ENCODE measurements at regions of chr14 and their contacts with region 1.

Region 1: DNA sequence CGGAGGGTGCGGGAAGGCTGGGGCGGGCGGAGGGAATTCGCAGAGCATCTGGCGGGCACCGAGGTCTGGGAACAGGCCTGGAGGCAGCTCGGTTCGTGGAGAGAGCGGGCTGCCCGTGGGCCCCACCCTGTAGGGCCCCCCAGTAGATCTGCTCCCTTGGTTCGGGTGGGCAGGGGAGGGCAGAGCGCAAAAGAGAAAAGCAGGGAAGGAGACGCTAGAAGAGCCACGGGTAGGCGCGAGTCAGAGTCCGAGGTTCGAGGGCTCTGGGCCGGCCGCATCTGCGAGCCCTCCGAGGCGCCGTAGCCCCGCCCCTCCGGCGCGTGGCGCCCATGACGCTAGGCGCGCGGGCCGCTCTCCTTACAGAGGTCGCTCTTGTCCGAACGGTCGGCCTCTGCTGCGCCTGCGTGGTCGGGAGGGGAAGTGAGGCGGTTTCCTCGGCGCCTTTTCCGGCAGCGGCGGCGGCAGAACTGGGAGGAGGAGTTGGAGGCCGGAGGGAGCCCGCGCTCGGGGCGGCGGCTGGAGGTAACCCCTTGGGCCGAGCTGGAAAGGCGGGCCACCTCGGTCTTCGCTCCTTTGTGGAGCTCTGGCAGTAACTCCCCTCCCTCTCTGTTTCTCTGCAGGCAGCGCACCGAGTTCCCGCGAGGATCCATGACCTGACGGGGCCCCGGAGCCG is at the start of gene ARF6:
- DNase-seq: peak; percentile 98
- H3K4me3 Mint-ChIP-seq: peak within 1 kb of the TSS; percentile 99
- H3K27ac Mint-ChIP-seq: peak within 1 kb of the TSS; percentile 99
- H3K4me1 Mint-ChIP-seq: peaks cover 26% of the 10 kb centered on the region
- H3K27me3 Mint-ChIP-seq: no peaks in the 10 kb centered on the region
- total RNA-seq, gene ARF6: 162 and 165 TPM in 2 replicates

Region 2: GRCh38 chr14:49620182-49621113 is 272.3 kb before region 1 on chr14 and contains the starts of genes MGAT2 and RPL36AL:
- intact Hi-C with region 1: loop called (anchors 5 kb)
- DNase-seq: peak; percentile 96
- H3K4me3 Mint-ChIP-seq: peak within 1 kb of the TSS; percentile 91
- H3K27ac Mint-ChIP-seq: peak within 1 kb of the TSS; percentile 94
- H3K4me1 Mint-ChIP-seq: peaks cover 44% of the 10 kb centered on the region
- H3K27me3 Mint-ChIP-seq: no peaks in the 10 kb centered on the region
- total RNA-seq, gene MGAT2: 57.0 and 57.9 TPM in 2 replicates
- total RNA-seq, gene RPL36AL: 278 and 292 TPM in 2 replicates

Region 3: GRCh38 chr14:49867831-49868723 is 24.7 kb before region 1 on chr14:
- intact Hi-C with region 1: loop called (anchors 1 kb)
- DNase-seq: peak; percentile 94
- H3K4me3 Mint-ChIP-seq: peak overlapping the region; percentile 91
- H3K27ac Mint-ChIP-seq: peak overlapping the region; percentile 94
- H3K4me1 Mint-ChIP-seq: peaks cover 22% of the 10 kb centered on the region
- H3K27me3 Mint-ChIP-seq: no peaks in the 10 kb centered on the region

Region 4: GRCh38 chr14:50038398-50039119 is 145.8 kb after region 1 on chr14:
- intact Hi-C with region 1: loop called (anchors 1 kb)
- DNase-seq: peak; percentile 58
- H3K4me3 Mint-ChIP-seq: peak overlapping the region; percentile 68
- H3K27ac Mint-ChIP-seq: peak overlapping the region; percentile 97
- H3K4me1 Mint-ChIP-seq: peaks cover 48% of the 10 kb centered on the region
- H3K27me3 Mint-ChIP-seq: no peaks in the 10 kb centered on the region

Region 5: GRCh38 chr14:50082784-50083466 is 190.2 kb after region 1 on chr14:
- intact Hi-C with region 1: loop called (anchors 1 kb)
- DNase-seq: peak; percentile 81
- H3K4me3 Mint-ChIP-seq: peak overlapping the region; percentile 49
- H3K27ac Mint-ChIP-seq: peak overlapping the region; percentile 91
- H3K4me1 Mint-ChIP-seq: peaks cover 62% of the 10 kb centered on the region
- H3K27me3 Mint-ChIP-seq: no peaks in the 10 kb centered on the region

Region 6: GRCh38 chr14:50321009-50321660 is 428.4 kb after region 1 on chr14:
- intact Hi-C with region 1: loop called (anchors 2 kb)
- DNase-seq: peak; percentile 67
- H3K4me3 Mint-ChIP-seq: no peak overlapping the region
- H3K27ac Mint-ChIP-seq: no peak overlapping the region
- H3K4me1 Mint-ChIP-seq: peaks cover 21% of the 10 kb centered on the region
- H3K27me3 Mint-ChIP-seq: no peaks in the 10 kb centered on the region